AG04450 (cell line): ENCODE measurements at regions of chr6 and their contacts with region 1.

Region 1: DNA sequence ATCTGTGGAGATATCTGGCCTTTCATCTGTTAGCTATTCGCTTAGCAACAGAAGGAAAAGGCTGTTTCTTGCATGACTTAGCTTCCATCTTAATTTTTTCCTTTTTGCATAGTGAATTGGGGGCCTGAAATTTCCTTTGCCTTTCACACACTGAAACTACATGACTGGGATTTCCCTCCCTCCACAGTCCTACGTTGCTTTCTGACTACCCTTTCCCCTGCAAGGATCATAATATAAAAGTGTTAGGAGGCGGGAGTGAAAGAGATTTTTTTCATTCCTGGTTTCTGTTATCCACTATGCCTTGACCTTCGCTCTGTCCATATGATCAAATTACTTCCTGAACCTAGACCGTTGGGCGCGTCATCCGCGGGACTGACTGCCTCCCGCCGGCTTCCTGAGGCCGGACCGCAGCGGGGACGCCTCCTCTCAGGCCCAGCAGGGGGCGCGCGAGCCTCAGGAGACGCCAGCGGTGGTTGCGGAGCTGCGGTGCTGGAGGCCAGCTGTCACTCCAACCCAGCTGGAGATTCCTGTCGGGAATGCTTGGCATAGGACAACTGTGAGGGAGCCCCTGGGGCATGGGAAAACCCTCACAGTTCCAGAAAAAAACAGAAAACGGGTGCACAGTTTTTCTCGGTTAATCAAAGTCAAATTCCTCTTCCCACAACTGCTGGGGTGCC is 55.6 kb downstream of the MEP1A start:
- DNase-seq: peak; percentile 10
- H3K4me3 ChIP-seq: peak overlapping the region; percentile 17; the same call in 1 of the 2 replicates
- H3K27ac ChIP-seq: no peak overlapping the region
- H3K27me3 ChIP-seq: peaks cover 5% of the 10 kb centered on the region
- CTCF ChIP-seq: peak; percentile 93

Region 2: GRCh38 chr6:46838033-46838432 is 10.8 kb before region 1 on chr6:
- CTCF ChIA-PET with region 1: interaction called, 10 read pairs
- POLR2A ChIA-PET with region 1: no interaction called
- DNase-seq: no peak
- H3K4me3 ChIP-seq: no peak overlapping the region
- H3K27ac ChIP-seq: no peak overlapping the region
- H3K27me3 ChIP-seq: no peaks in the 10 kb centered on the region
- CTCF ChIP-seq: no peak

Region 3: DNA sequence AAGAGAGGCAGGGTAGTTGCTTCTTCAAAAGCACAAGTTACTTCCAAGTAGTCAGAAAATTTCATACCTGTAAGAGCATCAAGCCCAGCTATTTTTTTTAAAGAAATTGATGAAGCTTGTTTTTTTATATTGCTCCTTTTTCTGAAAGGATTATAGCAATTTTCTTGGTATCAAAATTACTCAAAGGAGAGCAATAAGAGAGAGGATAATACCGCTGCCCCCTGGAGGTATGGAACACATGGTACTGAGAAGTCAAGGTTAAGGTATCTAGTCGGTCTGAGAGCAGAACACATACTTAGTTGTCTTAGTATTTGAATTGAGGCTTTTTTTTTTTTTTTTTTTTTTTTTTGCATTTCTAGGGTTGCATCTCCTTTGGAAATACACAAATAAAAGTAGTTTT is 13.6 kb after region 1 on chr6:
- CTCF ChIA-PET with region 1: interaction called, 22 read pairs
- POLR2A ChIA-PET with region 1: no interaction called
- DNase-seq: no peak
- H3K4me3 ChIP-seq: no peak overlapping the region
- H3K27ac ChIP-seq: no peak overlapping the region
- H3K27me3 ChIP-seq: no peaks in the 10 kb centered on the region
- CTCF ChIP-seq: no peak

Region 4: GRCh38 chr6:47047479-47048407 is 198.9 kb after region 1 on chr6:
- CTCF ChIA-PET with region 1: interaction called, 33 read pairs
- POLR2A ChIA-PET with region 1: no interaction called
- DNase-seq: peak; percentile 18
- H3K4me3 ChIP-seq: no peak overlapping the region
- H3K27ac ChIP-seq: no peak overlapping the region
- H3K27me3 ChIP-seq: peaks cover 4% of the 10 kb centered on the region
- CTCF ChIP-seq: peak; percentile 78